ENCODE measurements at regions of chr4 and their contacts with region 1.

Region 1: GRCh38 chr4:183659029-183659871 is at the starts of genes RWDD4 and TRAPPC11:
- DNase-seq: peak; percentile 99
- H3K4me3 ChIP-seq: peak within 1 kb of the TSS; percentile 91
- H3K27ac ChIP-seq: peak within 1 kb of the TSS; percentile 88
- H3K4me1 ChIP-seq: peaks cover 14% of the 10 kb centered on the region
- H3K27me3 ChIP-seq: no peaks in the 10 kb centered on the region
- CTCF ChIP-seq: no peak
- total RNA-seq, gene RWDD4: 29.4 and 33.8 TPM in 2 replicates
- total RNA-seq, gene TRAPPC11: 29.1 and 30.0 TPM in 2 replicates

Region 2: GRCh38 chr4:182255421-182256190 is 1403.6 kb before region 1 on chr4:
- CTCF ChIA-PET with region 1: no interaction called
- POLR2A ChIA-PET with region 1: no interaction called
- intact Hi-C with region 1: no loop called
- DNase-seq: peak; percentile 29
- H3K4me3 ChIP-seq: no peak overlapping the region
- H3K27ac ChIP-seq: no peak overlapping the region
- H3K4me1 ChIP-seq: no peaks in the 10 kb centered on the region
- H3K27me3 ChIP-seq: no peaks in the 10 kb centered on the region
- CTCF ChIP-seq: no peak

Region 3: DNA sequence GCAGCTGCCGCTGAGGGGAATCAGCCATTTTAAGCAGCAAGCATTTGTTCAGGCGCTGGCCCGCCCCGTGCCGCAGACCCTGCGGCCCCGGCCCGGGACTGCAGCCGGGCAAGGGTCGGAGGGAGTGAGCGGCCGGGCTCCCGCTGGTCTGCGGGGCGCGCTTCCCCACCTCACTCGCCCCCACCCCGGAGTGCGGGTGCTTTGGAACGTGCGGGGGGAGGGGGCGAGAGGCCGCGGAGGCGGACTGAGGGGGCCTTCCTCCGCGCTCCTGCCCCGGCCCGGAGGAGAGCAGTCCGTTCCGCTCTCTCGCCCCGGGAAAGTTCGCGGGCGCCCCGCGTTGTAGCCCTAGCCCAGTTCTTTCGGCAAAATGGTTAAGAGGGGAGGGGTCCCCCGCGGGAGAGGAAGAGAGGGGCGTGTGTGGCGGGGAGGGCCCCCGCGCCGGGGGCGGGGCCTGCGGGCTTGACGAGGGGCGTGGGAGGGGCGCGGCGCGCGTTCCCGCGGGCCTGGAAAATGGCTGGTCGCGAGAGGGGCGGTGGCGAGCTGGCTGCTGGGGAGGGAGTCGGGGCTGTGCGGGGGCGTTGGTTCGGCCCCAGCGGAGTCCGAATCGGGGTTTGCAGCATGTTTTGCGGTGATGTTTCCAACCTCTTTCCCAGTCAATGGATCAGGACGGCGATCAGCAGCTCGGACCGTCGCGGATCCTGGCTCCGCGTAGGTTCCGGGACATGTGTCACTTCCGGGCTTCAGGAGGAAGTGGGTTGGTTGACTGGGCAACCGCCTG is 153.4 kb before region 1 on chr4:
- CTCF ChIA-PET with region 1: no interaction called
- POLR2A ChIA-PET with region 1: no interaction called
- intact Hi-C with region 1: loop called (anchors 1 kb)
- DNase-seq: peak; percentile 91
- H3K4me3 ChIP-seq: peak overlapping the region; percentile 97
- H3K27ac ChIP-seq: peak overlapping the region; percentile 94
- H3K4me1 ChIP-seq: peaks cover 6% of the 10 kb centered on the region
- H3K27me3 ChIP-seq: no peaks in the 10 kb centered on the region
- CTCF ChIP-seq: no peak

Region 4: GRCh38 chr4:183610033-183610432 is 49.2 kb before region 1 on chr4:
- CTCF ChIA-PET with region 1: no interaction called
- POLR2A ChIA-PET with region 1: interaction called, 11 read pairs
- intact Hi-C with region 1: no loop called
- DNase-seq: peak; percentile 43
- H3K4me3 ChIP-seq: no peak overlapping the region
- H3K27ac ChIP-seq: no peak overlapping the region
- H3K4me1 ChIP-seq: no peaks in the 10 kb centered on the region
- H3K27me3 ChIP-seq: no peaks in the 10 kb centered on the region
- CTCF ChIP-seq: no peak

Measured in A673 (cell line).